Common myeloid progenitor, CD34-positive (primary cell): ENCODE measurements at regions of chr6 and their contacts with region 1.

Region 1: DNA sequence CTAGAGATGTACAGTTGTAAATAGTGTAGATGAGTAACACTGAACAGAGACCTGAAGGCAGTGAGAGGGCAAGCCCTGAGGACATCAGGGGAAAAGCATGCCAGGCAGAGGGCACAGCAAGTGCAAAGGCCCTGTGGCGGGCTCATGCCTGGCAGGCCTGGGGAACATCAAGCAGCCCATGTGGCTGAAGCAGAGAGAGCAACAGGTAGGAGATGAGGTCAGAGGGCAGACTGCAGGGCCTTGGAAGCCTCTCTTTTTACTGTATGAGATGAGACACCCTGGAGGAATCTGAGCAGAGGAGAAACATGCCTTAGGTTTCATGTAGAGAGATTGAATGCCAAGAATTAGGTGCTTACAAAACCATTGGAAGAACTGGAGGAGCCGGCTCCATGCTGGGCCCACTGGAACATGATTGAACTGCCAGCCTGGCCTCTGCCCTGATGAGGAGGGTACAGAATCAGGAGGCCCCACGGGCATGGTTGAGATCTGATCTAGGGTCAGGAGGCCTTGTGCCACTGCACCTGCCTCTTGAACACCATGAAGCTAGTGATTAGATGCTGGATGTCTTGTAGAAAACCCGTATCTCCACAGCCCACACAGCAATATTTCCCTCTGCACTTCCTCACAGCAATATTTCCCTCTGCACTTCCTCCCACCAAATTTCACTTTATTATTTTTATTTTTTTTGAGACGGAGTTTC is 5.9 kb upstream of the HMGA1 start:
- DNase-seq: peak in 2 of 3 donors; percentile 76 to 89
- H3K4me3 ChIP-seq: no peak overlapping the region
- H3K27ac ChIP-seq: no peak overlapping the region
- H3K4me1 ChIP-seq: peaks cover 0 to 38% (median 14%) of the 10 kb centered on the region in 4 experiments
- H3K27me3 ChIP-seq: no peaks in the 10 kb centered on the region

Region 2: DNA sequence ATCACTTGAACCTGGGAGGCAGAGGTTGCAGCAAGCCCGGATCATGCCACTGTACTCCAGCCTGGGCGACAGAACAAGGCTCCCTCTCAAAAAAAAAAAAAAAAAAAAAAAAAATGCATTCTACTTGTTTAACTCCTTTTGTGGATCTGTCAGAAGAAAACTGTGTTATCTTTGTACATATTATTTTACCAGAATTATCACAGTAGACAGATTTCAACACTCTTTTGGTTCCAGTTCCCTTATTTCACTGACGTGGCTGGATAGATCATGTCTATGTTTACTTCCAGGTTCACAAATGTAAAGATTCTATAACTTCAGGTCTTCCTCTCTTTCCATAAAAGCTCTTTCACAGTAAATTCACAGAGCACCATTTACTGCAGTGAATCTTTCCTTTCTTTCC is 143.2 kb after region 1 on chr6:
- CTCF ChIA-PET with region 1: no interaction called
- POLR2A ChIA-PET with region 1: no interaction called
- DNase-seq: peak in 2 of 3 donors; percentile 65 to 74
- H3K4me3 ChIP-seq: peak overlapping the region in 1 of 7 experiments; percentile 13
- H3K27ac ChIP-seq: peak overlapping the region in 1 of 2 experiments; percentile 45
- H3K4me1 ChIP-seq: peaks cover 0 to 24% (median 16%) of the 10 kb centered on the region in 4 experiments
- H3K27me3 ChIP-seq: no peaks in the 10 kb centered on the region

Region 3: DNA sequence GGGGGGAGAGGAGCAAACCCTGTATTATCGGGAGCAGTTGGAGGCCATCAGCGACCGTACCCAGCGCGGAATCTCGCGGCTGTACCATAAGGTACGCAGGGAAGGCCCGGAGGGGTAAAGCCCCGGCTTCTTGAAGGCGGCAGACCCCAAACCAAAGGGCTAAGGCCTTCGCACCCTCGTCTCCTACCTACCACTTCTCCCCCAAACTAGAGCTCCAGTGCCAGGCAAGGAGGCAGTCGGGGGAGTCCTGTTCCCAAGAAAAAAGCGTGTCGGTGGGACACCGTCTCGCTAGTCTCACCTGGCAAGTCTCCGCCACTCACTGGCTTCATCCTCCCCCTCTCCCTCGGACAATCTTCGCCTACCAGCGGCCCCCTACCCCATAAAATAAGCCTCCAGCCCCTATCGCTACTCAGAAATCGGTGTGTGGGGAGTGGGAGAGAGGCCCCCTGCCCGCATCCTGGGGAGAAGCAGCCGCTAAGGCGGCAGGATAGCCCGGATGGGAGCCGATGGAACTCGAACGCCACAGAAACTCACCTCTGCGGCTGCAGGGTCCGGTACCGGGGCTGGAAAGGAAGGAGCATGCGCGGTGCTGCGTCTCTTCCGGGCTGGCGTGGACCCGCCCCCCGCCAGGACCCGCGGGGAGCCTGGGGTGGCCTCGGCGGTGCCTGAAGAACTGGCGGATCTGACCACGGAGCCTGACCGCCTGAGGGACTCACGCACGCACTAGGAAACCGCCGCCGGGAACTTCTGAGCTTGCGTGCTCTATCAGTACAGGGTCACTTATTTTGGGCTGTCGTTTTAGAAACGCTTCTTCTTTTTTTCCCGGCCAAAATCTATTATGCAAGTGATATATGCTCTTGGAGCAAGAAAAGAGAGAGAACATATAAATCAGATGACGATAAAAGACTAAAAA is 194.9 kb after region 1 on chr6 and contains the start of gene RPS10:
- CTCF ChIA-PET with region 1: no interaction called
- POLR2A ChIA-PET with region 1: interaction called, 10 read pairs
- DNase-seq: peak; percentile 89 to 92 (median 91)
- H3K4me3 ChIP-seq: peak within 1 kb of the TSS; percentile 71 to 99 (median 88)
- H3K27ac ChIP-seq: peak within 1 kb of the TSS; percentile 89 to 96
- H3K4me1 ChIP-seq: peaks cover 0 to 21% (median 14%) of the 10 kb centered on the region in 4 experiments
- H3K27me3 ChIP-seq: no peaks in the 10 kb centered on the region